Mammary epithelial cell (primary cell): ENCODE measurements at regions of chr16 and their contacts with region 1.

Region 1: DNA sequence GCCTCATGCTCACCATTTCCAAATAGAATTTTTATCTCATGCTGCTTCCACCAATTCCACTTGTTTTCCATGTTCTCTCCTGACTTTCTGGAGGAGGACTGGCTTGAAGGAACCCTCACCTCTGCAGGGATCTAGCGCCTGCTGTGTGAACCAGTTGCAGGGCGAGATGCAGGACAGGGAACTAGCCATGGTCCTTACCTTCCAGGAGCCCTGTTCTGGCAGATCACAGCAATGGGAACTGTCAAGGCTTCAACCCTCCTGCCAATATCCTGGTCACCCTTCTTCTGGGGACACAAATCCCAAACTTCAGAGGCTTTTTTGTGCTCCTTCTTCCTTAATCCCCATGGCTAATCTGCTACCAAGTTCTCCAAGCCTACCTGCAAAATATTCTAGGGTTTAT is 60.4 kb upstream of the MMP2 start:
- DNase-seq: no peak
- H3K4me3 ChIP-seq: no peak overlapping the region
- H3K27ac ChIP-seq: no peak overlapping the region
- H3K4me1 ChIP-seq: no peaks in the 10 kb centered on the region
- H3K27me3 ChIP-seq: no peaks in the 10 kb centered on the region
- CTCF ChIP-seq: no peak

Region 2: DNA sequence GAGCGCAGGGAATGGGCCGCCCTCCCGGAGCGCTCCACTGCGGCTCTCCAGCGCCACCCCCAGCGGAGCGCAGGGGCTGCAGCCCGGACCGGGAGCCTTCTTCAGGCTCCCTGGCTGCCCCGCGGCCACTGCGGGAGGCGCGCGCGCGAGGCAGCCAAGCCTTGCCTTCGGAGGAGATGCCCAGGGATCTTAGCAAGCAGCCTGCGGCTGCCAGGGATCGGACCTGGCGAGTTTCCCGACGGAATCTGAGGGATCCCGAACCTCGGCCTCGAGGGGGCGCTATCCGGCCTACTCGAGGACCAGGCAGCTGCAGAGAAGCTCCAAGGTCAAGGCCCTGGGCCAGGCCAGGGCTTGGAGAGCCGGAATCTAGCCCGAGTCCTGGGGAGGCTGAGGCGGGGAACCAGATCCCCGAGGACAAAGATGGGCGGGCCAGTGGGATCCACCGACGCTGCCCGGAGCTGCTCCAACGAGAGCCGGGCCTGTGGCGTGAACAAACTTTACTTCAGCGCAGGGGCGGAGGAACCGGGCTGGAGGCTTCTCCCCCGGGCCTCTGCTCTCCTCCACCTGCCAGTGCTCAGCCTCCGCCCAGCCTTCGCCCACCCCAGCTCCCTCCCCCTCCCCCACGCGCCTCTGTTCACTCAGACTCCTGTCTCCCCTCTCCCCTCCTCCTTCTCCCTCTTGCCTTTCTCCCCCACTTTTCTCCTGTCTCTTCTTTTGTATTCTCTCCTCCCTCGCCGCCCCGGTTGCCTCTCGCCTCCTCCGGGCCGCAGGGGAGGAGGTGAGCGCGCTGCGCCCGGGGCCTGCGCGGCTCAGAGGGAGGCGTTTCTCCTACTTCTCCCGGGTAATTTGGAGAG is 94.7 kb before region 1 on chr16 and contains the start of gene IRX6:
- CTCF ChIA-PET with region 1: no interaction called
- dilution Hi-C with region 1: no loop called
- in situ Hi-C with region 1: no loop called
- intact Hi-C with region 1: no loop called
- DNase-seq: peak; percentile 37
- H3K4me3 ChIP-seq: peak within 1 kb of the TSS in 2 of 3 experiments; percentile 20 to 35
- H3K27ac ChIP-seq: no peak within 1 kb of the TSS
- H3K4me1 ChIP-seq: peaks cover 13% of the 10 kb centered on the region
- H3K27me3 ChIP-seq: peaks cover 8% of the 10 kb centered on the region
- CTCF ChIP-seq: peak; percentile 37 to 60
- total RNA-seq, gene IRX6: not detected

Region 3: DNA sequence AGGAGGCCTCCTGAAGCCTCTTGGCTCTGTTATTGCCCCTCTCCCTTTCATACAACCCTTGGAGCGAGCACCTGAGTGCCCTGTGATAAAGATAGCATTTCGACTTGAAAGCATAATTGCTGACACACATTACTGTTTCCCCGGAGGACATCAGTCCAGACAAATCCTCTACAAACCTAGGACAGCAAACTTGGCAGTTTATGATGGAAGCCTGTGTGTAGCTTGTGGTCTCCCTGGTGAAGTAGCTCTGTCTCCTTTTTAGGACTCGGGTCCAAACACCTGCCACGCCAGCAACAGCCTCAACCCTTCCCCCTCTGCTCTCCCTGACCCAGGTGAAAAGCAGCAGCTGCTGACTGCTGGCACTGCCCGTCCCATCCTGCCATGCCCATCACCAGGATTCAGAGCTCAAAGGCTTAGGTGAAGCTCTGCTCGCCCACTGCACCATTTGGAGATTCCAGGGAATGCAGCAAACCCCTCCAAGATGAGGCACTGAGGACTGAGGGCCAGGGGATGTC is 38.7 kb before region 1 on chr16:
- CTCF ChIA-PET with region 1: no interaction called
- dilution Hi-C with region 1: loop called (anchors 5 kb)
- in situ Hi-C with region 1: no loop called
- intact Hi-C with region 1: no loop called
- DNase-seq: no peak
- H3K4me3 ChIP-seq: no peak overlapping the region
- H3K27ac ChIP-seq: no peak overlapping the region
- H3K4me1 ChIP-seq: peaks cover 5% of the 10 kb centered on the region
- H3K27me3 ChIP-seq: no peaks in the 10 kb centered on the region
- CTCF ChIP-seq: no peak